Heart right ventricle (tissue), 16 donors: ENCODE measurements at regions of chr2 and their contacts with region 1.

Region 1: DNA sequence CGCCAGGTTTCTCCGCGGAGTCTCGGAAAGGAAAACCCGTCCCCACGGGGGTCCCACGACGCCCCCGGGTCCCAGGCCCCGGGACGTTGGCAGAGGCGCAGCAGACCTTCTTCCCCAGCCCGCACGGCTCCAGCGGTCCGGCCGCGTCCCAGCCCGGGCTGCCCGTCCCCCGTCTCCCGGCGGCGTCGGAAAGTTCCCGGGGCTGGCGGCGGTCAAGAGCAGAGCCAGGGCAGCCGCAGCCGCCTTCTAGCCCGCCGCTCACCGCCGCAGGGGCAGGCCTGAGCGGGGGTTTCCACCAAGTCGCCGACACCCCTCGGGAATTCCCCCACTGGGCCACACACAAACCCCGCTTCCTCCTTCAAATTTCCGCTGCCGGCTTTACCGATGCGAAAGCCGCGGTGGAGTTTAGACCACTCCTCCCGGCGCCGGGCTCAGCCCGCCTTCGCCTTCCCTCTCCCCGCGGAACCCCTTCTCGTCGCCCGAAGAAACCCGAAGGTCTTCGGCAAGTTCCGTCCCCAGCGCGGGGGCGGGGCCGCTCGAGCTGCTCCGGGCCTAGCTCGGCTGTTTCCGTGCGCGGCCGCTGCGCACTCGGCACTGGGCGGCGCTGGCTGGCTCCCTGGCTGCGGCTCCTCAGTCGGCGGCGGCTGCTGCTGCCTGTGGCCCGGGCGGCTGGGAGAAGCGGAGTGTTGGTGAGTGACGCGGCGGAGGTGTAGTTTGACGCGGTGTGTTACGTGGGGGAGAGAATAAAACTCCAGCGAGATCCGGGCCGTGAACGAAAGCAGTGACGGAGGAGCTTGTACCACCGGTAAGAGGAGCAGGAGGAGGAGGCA is at the start of gene CREB1:
- DNase-seq: peak; percentile 98 to 100
- ATAC-seq: peak; percentile 96 to 98 (median 96)
- H3K4me3 ChIP-seq: peak within 1 kb of the TSS; percentile 68 to 98 (median 83)
- H3K27ac ChIP-seq: peak within 1 kb of the TSS; percentile 96 to 100 (median 98)
- H3K4me1 ChIP-seq: peaks cover 7 to 61% (median 49%) of the 10 kb centered on the region in 9 donors
- H3K27me3 ChIP-seq: no peaks in the 10 kb centered on the region
- CTCF ChIP-seq: peak in 3 of 9 donors; percentile 23 to 36 (median 35)
- total RNA-seq, gene CREB1: 36.8 to 62.2 (median 45.7) TPM

Region 2: DNA sequence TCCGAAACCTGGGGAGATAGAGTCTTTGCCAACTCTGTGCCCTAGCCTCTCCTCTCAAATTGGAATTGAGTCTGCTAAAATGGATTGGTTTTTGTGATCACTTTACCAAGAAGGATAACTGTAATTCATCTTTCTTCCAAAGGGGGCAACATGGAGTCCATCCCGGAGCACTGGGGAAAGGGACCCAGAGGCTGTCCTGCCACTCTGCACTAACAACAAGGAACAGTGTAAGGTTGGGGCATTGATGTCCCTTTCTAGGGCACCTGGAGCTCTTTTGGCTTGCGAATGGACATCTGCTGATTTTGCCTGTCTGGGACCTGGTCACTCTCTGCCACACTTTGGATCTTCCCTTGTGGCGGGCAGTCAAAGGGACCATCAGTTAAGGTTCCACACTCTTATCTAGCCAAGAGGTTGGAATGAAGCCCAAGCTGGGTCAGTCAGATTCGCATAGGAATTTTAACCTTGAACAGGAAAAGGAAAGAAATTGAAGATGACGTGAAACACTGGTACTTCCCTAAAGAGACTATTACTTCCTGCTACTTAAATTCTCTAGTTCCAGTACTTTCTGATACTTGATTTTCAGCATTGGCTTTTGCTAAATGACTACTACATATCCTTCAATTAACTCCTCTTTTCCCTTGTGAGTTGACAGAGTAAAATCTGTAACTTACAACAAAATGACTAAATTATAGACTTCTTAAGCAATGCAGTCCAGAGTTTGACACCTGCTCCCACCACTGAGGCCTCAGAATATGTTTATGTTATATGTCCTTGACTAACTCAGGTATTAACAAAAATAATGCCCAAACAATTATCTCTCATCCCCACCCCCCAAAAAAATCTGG is 299.1 kb before region 1 on chr2:
- intact Hi-C with region 1: no loop called
- DNase-seq: no peak
- ATAC-seq: peak in 4 of 8 donors; percentile 30 to 39 (median 32)
- H3K4me3 ChIP-seq: no peak overlapping the region
- H3K27ac ChIP-seq: peak overlapping the region in 1 of 10 donors; percentile 84
- H3K4me1 ChIP-seq: peaks cover 0 to 51% (median 25%) of the 10 kb centered on the region in 9 donors
- H3K27me3 ChIP-seq: no peaks in the 10 kb centered on the region
- CTCF ChIP-seq: peak; percentile 38 to 62 (median 52)

Region 3: DNA sequence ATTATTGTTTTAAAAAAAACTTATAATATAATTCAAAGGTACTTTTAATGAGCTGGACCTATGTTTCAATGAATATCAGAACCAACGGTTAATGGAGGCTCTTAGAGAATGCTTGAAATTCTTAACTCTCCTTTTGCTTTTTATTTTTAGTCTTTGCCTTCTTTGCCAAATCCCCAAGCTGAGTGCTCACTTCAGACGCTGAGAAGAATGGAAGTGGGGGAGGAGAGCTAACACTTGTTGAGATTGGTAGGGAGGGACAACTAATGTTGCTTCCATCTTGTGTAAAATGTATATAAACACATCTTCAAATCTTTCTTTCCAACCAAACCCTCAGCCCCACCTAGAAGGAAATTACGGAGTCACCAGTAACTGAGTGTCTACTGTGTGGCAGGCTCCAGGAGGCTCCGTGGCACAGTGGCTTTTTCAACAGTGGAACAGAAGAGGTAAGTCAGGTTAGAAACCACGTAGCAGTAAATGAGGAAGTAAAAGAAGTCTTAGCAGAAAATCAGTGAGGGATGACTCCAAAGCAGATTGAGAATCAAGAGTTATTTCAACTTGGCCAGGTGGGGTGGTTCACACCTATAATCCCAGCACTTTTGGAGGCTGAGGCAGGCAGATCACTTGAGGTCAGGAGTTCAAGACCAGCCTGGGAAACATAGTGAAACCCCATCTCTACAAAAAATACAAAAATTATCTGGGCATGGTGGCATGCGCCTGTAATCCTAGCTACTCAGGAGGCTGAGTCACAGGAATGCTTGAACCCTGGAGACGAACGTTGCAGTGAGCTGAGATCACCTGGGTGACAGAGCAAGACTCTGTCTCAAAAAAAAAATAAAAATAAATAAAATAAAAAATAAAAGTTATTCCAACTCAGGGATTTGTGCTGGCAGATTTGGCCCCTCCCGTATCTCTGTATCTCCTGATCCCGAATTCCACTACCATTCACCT is 44.8 kb before region 1 on chr2:
- intact Hi-C with region 1: loop called in 1 of 10 experiments (anchors 5 kb)
- DNase-seq: no peak
- ATAC-seq: peak; percentile 43 to 63 (median 52)
- H3K4me3 ChIP-seq: no peak overlapping the region
- H3K27ac ChIP-seq: peak overlapping the region; percentile 20 to 83 (median 68)
- H3K4me1 ChIP-seq: peaks cover 0 to 56% (median 14%) of the 10 kb centered on the region in 9 donors
- H3K27me3 ChIP-seq: no peaks in the 10 kb centered on the region
- CTCF ChIP-seq: no peak

Region 4: GRCh38 chr2:207571370-207571769 is 41.8 kb after region 1 on chr2:
- intact Hi-C with region 1: loop called in 1 of 10 experiments (anchors 5 kb)
- DNase-seq: no peak
- ATAC-seq: no peak
- H3K4me3 ChIP-seq: no peak overlapping the region
- H3K27ac ChIP-seq: no peak overlapping the region
- H3K4me1 ChIP-seq: peaks cover 0 to 7% (median 0%) of the 10 kb centered on the region in 9 donors
- H3K27me3 ChIP-seq: no peaks in the 10 kb centered on the region
- CTCF ChIP-seq: no peak

Region 5: DNA sequence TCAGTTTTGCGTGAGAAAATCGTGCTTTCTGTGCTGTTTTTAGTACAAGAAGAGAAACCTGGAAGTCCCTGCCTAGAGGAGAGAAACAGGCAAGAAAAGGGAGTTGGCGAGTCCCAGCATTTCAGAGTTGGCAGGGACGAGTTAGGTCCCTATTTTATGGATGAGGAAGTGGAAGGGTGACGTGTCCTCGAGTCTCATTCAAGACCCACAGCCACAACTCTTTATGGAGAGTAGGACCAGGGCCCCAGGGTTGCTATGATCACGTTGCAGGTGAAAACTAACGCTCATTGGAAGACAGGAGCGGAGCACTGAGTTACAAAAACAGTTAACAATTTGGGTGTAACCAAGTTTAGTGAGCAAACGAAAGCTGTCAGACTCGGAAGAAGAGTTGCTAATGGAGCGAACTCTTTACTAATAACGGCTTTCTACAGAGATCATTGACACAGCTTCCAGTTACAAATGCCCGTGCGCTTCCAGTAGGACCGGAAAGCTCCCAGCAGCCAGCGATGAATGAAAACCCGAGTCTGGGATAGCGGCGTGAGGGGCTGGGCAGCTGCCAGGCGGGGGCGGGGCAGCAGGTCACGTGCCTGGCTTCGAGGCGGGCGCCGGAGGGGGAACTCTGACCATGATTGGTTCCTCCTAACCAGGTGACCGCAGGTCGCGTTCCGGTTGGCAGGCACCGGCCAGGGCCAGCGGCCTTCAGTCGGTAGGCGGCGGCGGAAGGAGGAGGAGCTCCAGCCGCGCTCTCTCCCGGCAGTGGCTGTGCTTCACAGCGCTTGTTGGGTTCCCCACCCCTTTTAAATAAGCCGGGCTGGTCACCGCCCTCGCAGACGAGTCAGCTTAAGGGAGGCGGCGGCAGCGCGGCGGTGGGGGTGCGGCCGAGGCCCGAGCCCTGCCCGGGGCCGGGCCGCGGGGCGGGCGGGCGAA is 181.5 kb after region 1 on chr2 and contains the start of gene CCNYL1:
- intact Hi-C with region 1: loop called in 3 of 10 experiments (anchors 1 to 10 kb)
- DNase-seq: peak; percentile 98 to 99
- ATAC-seq: peak; percentile 99 to 100 (median 100)
- H3K4me3 ChIP-seq: peak within 1 kb of the TSS; percentile 75 to 98 (median 91)
- H3K27ac ChIP-seq: peak within 1 kb of the TSS; percentile 51 to 95 (median 91)
- H3K4me1 ChIP-seq: peaks cover 2 to 28% (median 22%) of the 10 kb centered on the region in 9 donors
- H3K27me3 ChIP-seq: no peaks in the 10 kb centered on the region
- CTCF ChIP-seq: peak in 7 of 9 donors; percentile 17 to 54 (median 47)
- total RNA-seq, gene CCNYL1: 5.6 to 16.1 (median 9.7) TPM

Region 6: DNA sequence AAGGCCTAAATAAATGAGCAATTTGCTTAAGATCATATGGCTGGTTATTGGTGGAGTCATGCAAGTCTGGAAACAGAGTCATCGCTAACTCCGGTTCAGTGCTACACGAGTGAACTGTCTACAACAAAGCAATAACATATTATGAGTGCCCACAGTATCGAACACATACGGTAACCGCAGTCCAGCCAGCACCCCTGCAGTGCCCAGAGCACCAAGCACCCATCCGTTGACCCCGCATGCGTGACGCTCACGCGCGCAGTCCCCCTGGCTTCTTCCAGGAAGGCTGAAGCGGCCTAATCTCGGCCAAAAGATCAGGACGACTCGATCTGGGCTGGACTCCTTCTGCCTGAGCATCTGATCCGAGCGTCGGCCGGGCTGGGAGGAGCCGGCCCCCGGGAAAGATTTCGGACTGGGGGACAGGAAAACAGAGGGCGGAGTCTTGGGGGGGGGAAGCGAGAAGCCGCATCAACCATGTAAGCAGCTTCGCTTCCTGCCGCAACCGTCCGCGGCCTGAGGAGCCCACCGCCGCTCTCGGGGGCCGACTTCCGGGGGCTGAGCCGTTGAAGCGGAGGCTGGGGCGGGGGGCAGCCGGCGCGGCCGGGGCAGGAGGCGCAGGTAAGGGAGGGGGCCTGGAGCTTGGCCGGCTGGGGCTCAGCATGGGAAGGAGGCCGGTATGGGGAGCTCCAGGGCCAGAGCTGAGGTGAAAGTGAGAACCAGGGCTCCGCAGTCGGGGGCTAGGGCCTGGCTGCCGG is 736.4 kb after region 1 on chr2 and contains the start of gene PIKFYVE:
- intact Hi-C with region 1: loop called in 1 of 10 experiments (anchors 5 kb)
- DNase-seq: peak; percentile 92 to 98
- ATAC-seq: peak; percentile 97 to 98 (median 97)
- H3K4me3 ChIP-seq: peak within 1 kb of the TSS; percentile 73 to 99 (median 90)
- H3K27ac ChIP-seq: peak within 1 kb of the TSS; percentile 66 to 99 (median 96)
- H3K4me1 ChIP-seq: peaks cover 0 to 41% (median 35%) of the 10 kb centered on the region in 9 donors
- H3K27me3 ChIP-seq: no peaks in the 10 kb centered on the region
- CTCF ChIP-seq: peak in 2 of 9 donors; percentile 16 to 26
- total RNA-seq, gene PIKFYVE: 12.9 to 24.8 (median 18.4) TPM